Calu3 (cell line): ENCODE measurements at regions of chr18 and their contacts with region 1.

Region 1: GRCh38 chr18:7177116-7177744 is 53.7 kb upstream of the LRRC30 start:
- DNase-seq: peak; percentile 53
- H3K4me3 Mint-ChIP-seq: no peak overlapping the region
- H3K27ac Mint-ChIP-seq: no peak overlapping the region
- H3K4me1 Mint-ChIP-seq: no peaks in the 10 kb centered on the region
- H3K27me3 Mint-ChIP-seq: peaks cover 63% of the 10 kb centered on the region
- CTCF ChIP-seq: peak; percentile 39

Region 2: GRCh38 chr18:7021994-7022840 is 155.0 kb before region 1 on chr18:
- CTCF ChIA-PET with region 1: interaction called, 4 read pairs
- intact Hi-C with region 1: loop called (anchors 5 kb)
- DNase-seq: peak; percentile 71
- H3K4me3 Mint-ChIP-seq: no peak overlapping the region
- H3K27ac Mint-ChIP-seq: no peak overlapping the region
- H3K4me1 Mint-ChIP-seq: no peaks in the 10 kb centered on the region
- H3K27me3 Mint-ChIP-seq: peaks cover 33% of the 10 kb centered on the region
- CTCF ChIP-seq: peak; percentile 86

Region 3: DNA sequence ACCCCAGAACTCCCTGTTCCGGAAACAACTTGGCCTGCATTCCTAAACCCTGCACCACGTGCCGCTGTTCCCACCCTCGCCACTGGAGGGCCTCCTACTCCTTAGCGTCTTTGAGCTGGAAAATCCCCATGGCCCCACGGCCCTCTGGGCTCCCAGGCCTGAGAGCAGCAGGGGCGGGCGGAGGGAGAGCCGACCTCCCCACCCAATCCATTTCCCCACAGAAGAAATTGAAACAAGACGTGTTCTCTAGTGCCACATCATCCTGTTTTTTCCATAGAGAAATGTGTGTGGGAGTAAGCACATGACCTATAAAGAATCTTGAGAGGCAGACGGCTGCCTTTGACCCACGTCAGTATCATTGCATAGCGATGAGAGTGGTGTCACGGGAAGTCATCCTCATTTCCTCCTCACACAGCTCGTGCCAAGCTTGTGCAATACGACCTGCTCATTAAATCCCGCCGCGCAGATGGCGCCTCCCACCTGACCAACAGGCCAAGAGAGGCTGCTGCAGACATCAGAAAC is 138.8 kb before region 1 on chr18:
- CTCF ChIA-PET with region 1: interaction called, 33 read pairs
- intact Hi-C with region 1: loop called (anchors 1 kb)
- DNase-seq: peak; percentile 71
- H3K4me3 Mint-ChIP-seq: no peak overlapping the region
- H3K27ac Mint-ChIP-seq: no peak overlapping the region
- H3K4me1 Mint-ChIP-seq: no peaks in the 10 kb centered on the region
- H3K27me3 Mint-ChIP-seq: peaks cover 40% of the 10 kb centered on the region
- CTCF ChIP-seq: peak; percentile 35

Region 4: GRCh38 chr18:7259475-7260081 is 82.3 kb after region 1 on chr18:
- CTCF ChIA-PET with region 1: no interaction called
- intact Hi-C with region 1: no loop called
- DNase-seq: no peak
- H3K4me3 Mint-ChIP-seq: no peak overlapping the region
- H3K27ac Mint-ChIP-seq: no peak overlapping the region
- H3K4me1 Mint-ChIP-seq: no peaks in the 10 kb centered on the region
- H3K27me3 Mint-ChIP-seq: peaks cover 25% of the 10 kb centered on the region
- CTCF ChIP-seq: no peak